Left colon (tissue), 2 donors: ENCODE measurements at regions of chr11 and their contacts with region 1.

Region 1: GRCh38 chr11:122853971-122854446 is 15.7 kb downstream of the CRTAM start:
- DNase-seq: peak in 1 of 2 donors; percentile 20
- ATAC-seq: peak; percentile 54

Region 2: GRCh38 chr11:122633219-122633829 is 220.7 kb before region 1 on chr11:
- intact Hi-C with region 1: loop called in 1 of 2 experiments (anchors 10 kb)
- DNase-seq: no peak
- ATAC-seq: no peak

Region 3: GRCh38 chr11:122781378-122782195 is 72.4 kb before region 1 on chr11:
- intact Hi-C with region 1: loop called in 1 of 2 experiments (anchors 10 kb)
- DNase-seq: peak; percentile 70 to 85
- ATAC-seq: peak; percentile 94

Region 4: GRCh38 chr11:122796128-122796717 is 57.8 kb before region 1 on chr11:
- intact Hi-C with region 1: loop called in 1 of 2 experiments (anchors 5 kb)
- DNase-seq: peak in 1 of 2 donors; percentile 68
- ATAC-seq: peak; percentile 63